Panc1 (cell line): ENCODE measurements at regions of chr11 and their contacts with region 1.

Region 1: GRCh38 chr11:128695539-128696221 is 1.8 kb downstream of the FLI1 start:
- DNase-seq: no peak
- ATAC-seq: no peak
- H3K4me3 ChIP-seq: peak overlapping the region; percentile 40 to 63; a peak in 1 of 4 replicates
- H3K27ac ChIP-seq: no peak overlapping the region
- H3K4me1 ChIP-seq: no peaks in the 10 kb centered on the region; the same call in 1 of the 2 replicates
- H3K27me3 ChIP-seq: peaks cover 47% of the 10 kb centered on the region
- CTCF ChIP-seq: no peak

Region 2: DNA sequence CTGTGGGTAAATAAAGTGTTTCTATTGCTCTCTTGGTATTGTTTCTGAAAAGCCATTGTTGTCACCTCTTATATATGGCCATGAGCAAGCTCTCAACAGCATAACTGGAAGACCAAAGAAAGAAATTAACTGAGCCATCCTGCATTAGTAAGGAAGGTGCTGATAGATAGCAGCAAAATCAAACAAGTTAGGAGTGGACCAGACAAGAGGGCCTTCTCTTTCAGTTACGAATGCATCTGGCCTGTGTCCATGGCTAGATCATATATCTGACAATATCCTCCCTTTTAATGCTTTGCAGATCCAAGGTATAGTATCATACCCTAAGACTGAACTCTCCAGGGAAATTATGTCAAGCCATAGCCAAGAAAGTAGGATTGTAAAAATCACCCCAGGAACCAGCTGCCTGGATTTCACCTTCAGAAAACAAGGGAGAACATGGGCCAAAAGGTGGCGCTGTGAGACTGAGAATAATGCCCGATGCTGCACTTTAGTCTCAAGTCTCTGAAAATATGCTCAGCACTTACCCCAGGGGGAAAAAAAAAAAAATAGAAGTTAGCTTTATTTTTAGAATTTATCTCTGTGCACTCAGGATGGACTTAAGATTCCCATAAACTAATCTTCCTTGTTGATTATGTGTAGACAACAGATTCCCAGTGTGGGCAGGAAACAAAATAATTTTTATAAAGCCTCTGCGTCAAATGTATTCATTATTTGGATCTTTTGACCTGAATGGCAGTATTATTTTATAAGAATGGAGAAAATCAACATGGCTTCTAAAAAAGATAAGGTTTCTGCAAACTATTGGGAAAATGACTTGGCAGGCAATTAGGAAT is 523.4 kb before region 1 on chr11:
- CTCF ChIA-PET with region 1: interaction called, 15 read pairs
- POLR2A ChIA-PET with region 1: no interaction called
- in situ Hi-C with region 1: no loop called
- intact Hi-C with region 1: no loop called
- DNase-seq: peak; percentile 89
- ATAC-seq: peak; percentile 96
- H3K4me3 ChIP-seq: no peak overlapping the region
- H3K27ac ChIP-seq: peak overlapping the region; percentile 49
- H3K4me1 ChIP-seq: 0 out of 2 replicates have a peak, but pooled peaks cover 6% of the 10 kb centered on the region
- H3K27me3 ChIP-seq: no peaks in the 10 kb centered on the region
- CTCF ChIP-seq: peak; percentile 86

Region 3: GRCh38 chr11:128779036-128779435 is 83.4 kb after region 1 on chr11:
- CTCF ChIA-PET with region 1: no interaction called
- POLR2A ChIA-PET with region 1: no interaction called
- in situ Hi-C with region 1: no loop called
- intact Hi-C with region 1: no loop called
- DNase-seq: no peak
- ATAC-seq: no peak
- H3K4me3 ChIP-seq: no peak overlapping the region
- H3K27ac ChIP-seq: no peak overlapping the region
- H3K4me1 ChIP-seq: no peaks in the 10 kb centered on the region
- H3K27me3 ChIP-seq: peaks cover 3% of the 10 kb centered on the region; the same call in 1 of the 2 replicates
- CTCF ChIP-seq: no peak